ENCODE measurements at regions of chr9 and their contacts with region 1.

Region 1: GRCh38 chr9:129737479-129738274 is 15.2 kb downstream of the PTGES start:
- DNase-seq: peak; percentile 80 to 85
- H3K4me3 ChIP-seq: peak overlapping the region in 2 of 3 donors; percentile 34 to 38
- H3K27ac ChIP-seq: peak overlapping the region in 2 of 3 donors; percentile 69 to 77
- H3K4me1 ChIP-seq: peaks cover 0 to 4% of the 10 kb centered on the region in 2 donors
- H3K27me3 ChIP-seq: no peaks in the 10 kb centered on the region
- CTCF ChIP-seq: peak; percentile 91 to 98 (median 93)
- POLR2A ChIP-seq: peak in 1 of 2 donors; percentile 5

Region 2: GRCh38 chr9:129544761-129545160 is 192.9 kb before region 1 on chr9:
- intact Hi-C with region 1: no loop called
- DNase-seq: no peak
- H3K4me3 ChIP-seq: no peak overlapping the region
- H3K27ac ChIP-seq: no peak overlapping the region
- H3K4me1 ChIP-seq: peaks cover 3 to 19% of the 10 kb centered on the region in 2 donors
- H3K27me3 ChIP-seq: no peaks in the 10 kb centered on the region
- CTCF ChIP-seq: no peak
- POLR2A ChIP-seq: no peak

Region 3: GRCh38 chr9:129641746-129642513 is 95.7 kb before region 1 on chr9 and contains the start of gene ASB6:
- intact Hi-C with region 1: loop called (anchors 10 kb)
- DNase-seq: peak; percentile 98 to 99
- H3K4me3 ChIP-seq: peak within 1 kb of the TSS; percentile 77 to 79 (median 78)
- H3K27ac ChIP-seq: peak within 1 kb of the TSS; percentile 44 to 80 (median 65)
- H3K4me1 ChIP-seq: peaks cover 17 to 19% of the 10 kb centered on the region in 2 donors
- H3K27me3 ChIP-seq: no peaks in the 10 kb centered on the region
- CTCF ChIP-seq: peak; percentile 94 to 100 (median 100)
- POLR2A ChIP-seq: peak in 1 of 2 donors; percentile 70
- total RNA-seq, gene ASB6: 21.7 to 29.2 (median 24.0) TPM

Measured in thyroid gland (tissue), 4 donors.